A673 (cell line): ENCODE measurements at regions of chr9 and their contacts with region 1.

Region 1: DNA sequence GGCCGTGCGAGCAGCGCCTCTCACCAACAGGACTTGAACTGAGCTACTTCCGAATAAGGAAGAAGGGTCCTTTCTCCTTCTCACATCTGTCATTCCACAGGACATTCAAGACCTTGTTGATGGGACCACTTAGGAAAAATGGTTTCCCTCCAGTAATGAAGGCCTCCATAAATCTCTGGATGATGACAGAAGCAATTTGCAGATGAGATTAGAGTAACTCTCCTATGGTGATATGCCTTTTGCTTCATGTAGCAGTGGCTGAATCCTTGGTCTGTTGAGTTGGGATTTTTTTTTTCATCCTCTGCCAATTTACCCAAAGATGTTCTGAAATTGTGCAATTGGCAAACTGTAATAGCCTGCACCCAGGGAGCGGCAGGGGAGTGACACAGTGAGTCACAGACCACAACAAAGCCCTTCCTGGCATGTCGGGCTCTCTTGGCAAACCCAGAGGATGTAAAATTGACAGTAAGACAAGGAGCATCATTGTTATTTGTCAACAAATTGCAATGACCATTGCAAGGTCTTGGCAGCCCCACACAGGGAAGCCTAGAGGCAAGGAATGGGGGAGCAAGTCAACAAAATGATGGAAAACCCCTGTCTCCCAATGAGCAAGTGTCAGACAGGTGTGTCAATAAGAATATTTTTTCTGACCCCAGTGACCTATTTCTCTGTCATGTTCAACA is 275.9 kb downstream of the ACTL7B start:
- DNase-seq: peak; percentile 82
- H3K4me3 ChIP-seq: no peak overlapping the region
- H3K27ac ChIP-seq: no peak overlapping the region
- H3K4me1 ChIP-seq: peaks cover 11% of the 10 kb centered on the region
- H3K27me3 ChIP-seq: no peaks in the 10 kb centered on the region
- CTCF ChIP-seq: no peak

Region 2: GRCh38 chr9:107504569-107505377 is 1075.1 kb before region 1 on chr9:
- CTCF ChIA-PET with region 1: no interaction called
- POLR2A ChIA-PET with region 1: interaction called, 10 read pairs
- intact Hi-C with region 1: no loop called
- DNase-seq: no peak
- H3K4me3 ChIP-seq: no peak overlapping the region
- H3K27ac ChIP-seq: no peak overlapping the region
- H3K4me1 ChIP-seq: no peaks in the 10 kb centered on the region
- H3K27me3 ChIP-seq: no peaks in the 10 kb centered on the region
- CTCF ChIP-seq: no peak

Region 3: DNA sequence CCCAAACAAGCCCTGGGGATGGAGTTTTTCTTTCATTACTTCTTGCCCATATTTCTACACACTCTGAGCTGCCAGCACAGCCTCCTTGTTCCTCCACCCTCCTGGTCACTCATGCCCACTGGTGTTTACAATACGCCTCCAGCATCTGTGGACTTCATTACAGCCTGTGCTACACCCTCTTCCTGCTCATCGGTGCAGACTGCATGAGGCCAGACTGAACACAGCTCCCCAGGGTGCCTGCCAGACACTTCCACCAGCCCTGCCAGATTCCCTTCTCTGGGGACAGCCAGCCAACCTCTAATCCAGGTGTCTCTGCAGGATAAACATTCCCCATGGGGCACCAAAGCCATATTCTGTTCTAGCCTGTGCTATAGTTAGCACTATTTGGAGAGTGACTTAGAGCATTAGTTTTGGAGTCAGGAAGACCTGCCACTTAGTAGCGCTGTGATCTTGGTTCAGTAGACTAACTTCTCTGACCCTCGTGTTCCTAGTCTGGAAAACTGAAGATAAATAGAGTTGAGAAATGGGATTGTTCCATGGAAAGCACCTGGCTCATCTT is 926.6 kb before region 1 on chr9:
- CTCF ChIA-PET with region 1: no interaction called
- POLR2A ChIA-PET with region 1: no interaction called
- intact Hi-C with region 1: no loop called
- DNase-seq: no peak
- H3K4me3 ChIP-seq: no peak overlapping the region
- H3K27ac ChIP-seq: no peak overlapping the region
- H3K4me1 ChIP-seq: no peaks in the 10 kb centered on the region
- H3K27me3 ChIP-seq: no peaks in the 10 kb centered on the region
- CTCF ChIP-seq: no peak

Region 4: DNA sequence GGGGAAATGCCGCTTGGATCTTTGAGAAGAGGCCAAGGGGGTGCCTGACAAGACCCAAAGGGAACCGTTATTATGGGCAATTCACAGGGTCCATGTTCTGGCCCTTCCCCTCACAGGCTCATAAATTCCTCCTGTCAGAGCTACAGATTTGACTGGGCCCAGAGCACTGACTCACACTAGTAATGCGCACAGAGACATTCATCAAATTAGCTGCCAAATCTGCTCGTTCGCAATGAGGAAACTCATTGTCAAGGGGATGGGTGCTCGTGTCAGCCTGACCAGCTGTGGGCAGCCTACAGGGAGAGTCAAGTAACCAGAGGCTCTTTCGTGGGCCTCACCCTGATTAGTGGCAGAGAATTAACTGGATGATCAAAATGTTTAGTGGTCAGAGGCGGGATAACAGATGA is 101.5 kb before region 1 on chr9:
- CTCF ChIA-PET with region 1: no interaction called
- POLR2A ChIA-PET with region 1: no interaction called
- intact Hi-C with region 1: no loop called
- DNase-seq: peak; percentile 21
- H3K4me3 ChIP-seq: no peak overlapping the region
- H3K27ac ChIP-seq: no peak overlapping the region
- H3K4me1 ChIP-seq: peaks cover 3% of the 10 kb centered on the region
- H3K27me3 ChIP-seq: no peaks in the 10 kb centered on the region
- CTCF ChIP-seq: no peak

Region 5: GRCh38 chr9:108761655-108762347 is 181.9 kb after region 1 on chr9:
- CTCF ChIA-PET with region 1: no interaction called
- POLR2A ChIA-PET with region 1: no interaction called
- intact Hi-C with region 1: no loop called
- DNase-seq: peak; percentile 64
- H3K4me3 ChIP-seq: no peak overlapping the region
- H3K27ac ChIP-seq: no peak overlapping the region
- H3K4me1 ChIP-seq: peaks cover 2% of the 10 kb centered on the region
- H3K27me3 ChIP-seq: no peaks in the 10 kb centered on the region
- CTCF ChIP-seq: peak; percentile 86